AG04449 (cell line): ENCODE measurements at regions of chr10 and their contacts with region 1.

Region 1: GRCh38 chr10:124388823-124389612 is 29.7 kb downstream of the OAT start:
- DNase-seq: no peak
- H3K4me3 ChIP-seq: peak overlapping the region; percentile 50
- CTCF ChIP-seq: peak; percentile 97

Region 2: DNA sequence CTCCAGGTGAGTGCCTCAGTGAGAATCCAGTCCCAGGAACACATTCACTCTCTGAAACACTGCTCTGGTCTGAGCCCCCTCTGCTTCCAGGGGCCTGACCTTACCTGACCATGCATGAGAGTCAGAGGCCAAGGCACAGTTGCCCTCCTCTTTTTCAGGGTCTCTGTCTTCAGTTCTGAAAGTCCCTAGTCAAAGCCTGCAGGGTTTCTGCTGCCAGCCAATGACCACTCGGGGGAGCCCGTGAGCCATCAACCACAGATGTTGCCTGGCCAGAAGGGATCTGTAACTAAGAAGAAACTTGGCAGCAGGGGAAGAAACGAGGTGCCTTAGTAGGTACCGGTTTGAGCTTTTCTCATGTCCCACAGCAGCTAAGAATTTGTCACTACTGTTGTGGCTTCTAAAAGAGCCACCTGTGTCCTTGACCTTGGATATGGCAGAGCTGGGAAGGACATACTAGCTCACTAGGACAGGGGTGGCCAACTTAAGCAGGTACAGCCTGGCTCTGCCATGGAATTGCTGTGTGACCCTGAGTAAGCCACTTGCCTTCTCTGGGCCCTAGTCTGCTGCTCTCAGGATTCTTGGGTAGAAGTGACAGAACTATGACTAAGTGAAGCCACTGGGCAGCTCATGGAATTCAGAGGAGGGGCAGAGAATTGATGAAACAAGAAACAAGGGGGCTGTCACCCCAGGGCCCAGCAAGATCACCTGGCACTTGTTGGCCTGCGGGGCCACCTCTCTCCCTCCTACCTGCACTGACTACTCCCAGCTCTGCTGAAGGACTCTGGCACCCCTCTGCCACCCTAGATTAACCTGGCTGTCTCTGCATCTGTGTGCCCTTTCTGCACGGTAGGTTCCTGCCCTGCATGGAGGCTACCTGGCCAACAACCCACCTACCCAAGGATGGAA is 806.7 kb before region 1 on chr10:
- CTCF ChIA-PET with region 1: interaction called, 17 read pairs
- POLR2A ChIA-PET with region 1: no interaction called
- DNase-seq: peak; percentile 19
- H3K4me3 ChIP-seq: no peak overlapping the region
- CTCF ChIP-seq: peak; percentile 90

Region 3: DNA sequence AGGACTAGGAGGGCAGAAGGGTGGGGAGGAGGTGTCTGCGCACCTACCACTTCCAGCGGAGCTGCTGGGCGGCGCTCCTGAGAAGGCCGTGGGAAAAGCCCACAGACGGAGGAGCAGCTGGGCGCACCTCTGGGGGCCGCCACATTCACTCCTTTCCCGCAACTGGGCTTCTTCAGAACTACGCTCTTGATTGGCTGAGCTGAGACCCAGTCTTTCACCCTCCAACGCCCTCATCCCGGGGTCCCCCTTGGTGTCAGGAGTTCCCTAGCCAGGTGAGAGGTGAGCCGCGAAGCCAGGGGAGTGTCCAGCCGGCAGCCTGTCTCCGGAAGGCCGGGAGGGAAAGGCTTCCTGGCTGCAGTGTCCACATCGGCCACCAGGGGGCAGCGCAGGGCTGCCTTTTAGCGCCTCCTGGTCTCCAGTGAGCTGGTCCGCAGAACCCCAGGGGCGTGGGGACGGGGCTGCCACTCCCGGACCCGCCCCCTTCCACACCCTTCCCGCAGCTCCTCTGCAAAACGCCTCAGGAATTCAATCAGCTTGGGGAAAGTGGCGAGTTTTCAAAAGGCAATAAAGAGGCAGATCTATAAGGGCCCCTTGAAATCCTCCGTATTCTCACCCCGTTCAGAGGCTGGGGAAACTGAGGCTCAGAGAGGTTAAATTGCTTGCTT is 394.5 kb before region 1 on chr10:
- CTCF ChIA-PET with region 1: interaction called, 573 read pairs
- POLR2A ChIA-PET with region 1: interaction called, 9 read pairs
- DNase-seq: peak; percentile 59
- H3K4me3 ChIP-seq: peak overlapping the region; percentile 44
- CTCF ChIP-seq: peak; percentile 99

Region 4: DNA sequence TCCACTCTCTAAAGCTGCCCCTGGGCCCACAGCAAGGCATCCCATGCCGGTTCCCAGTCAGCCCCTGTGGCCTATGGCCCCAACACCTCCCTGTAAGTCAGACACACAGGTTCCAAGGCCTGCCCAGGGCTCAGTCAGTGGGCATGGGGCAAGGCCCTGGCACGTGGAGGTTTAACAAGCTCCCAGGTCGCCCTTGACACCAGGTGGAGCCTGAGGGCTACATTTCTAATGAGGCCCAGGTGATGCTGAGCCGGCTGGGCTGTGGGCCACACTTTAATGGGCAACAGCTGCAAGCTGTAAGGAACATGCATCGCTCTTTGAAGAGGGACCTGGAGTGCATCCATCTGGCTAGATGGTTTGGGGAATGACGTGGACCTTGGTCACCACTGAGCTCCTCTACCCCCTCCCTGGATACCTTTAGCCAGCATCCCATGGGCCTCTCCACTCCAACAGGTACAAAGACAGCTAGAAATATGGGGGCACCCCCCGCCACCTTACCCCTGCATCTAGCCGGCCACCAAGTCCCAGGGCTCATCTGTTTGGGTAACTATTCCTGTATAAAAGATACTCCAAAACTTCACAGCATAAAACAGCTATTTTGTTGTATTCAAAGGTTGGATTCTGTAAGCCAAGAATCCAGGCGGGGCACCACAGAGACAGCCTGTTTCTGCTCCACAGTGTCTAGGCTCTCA is 92.8 kb before region 1 on chr10:
- CTCF ChIA-PET with region 1: interaction called, 12 read pairs
- POLR2A ChIA-PET with region 1: no interaction called
- DNase-seq: no peak
- H3K4me3 ChIP-seq: no peak overlapping the region
- CTCF ChIP-seq: no peak

Region 5: GRCh38 chr10:124372899-124373298 is 16.1 kb before region 1 on chr10:
- CTCF ChIA-PET with region 1: interaction called, 19 read pairs
- POLR2A ChIA-PET with region 1: no interaction called
- DNase-seq: no peak
- H3K4me3 ChIP-seq: no peak overlapping the region
- CTCF ChIP-seq: no peak

Region 6: GRCh38 chr10:124409696-124410095 is 20.7 kb after region 1 on chr10:
- CTCF ChIA-PET with region 1: interaction called, 37 read pairs
- POLR2A ChIA-PET with region 1: interaction called, 3 read pairs
- DNase-seq: no peak
- H3K4me3 ChIP-seq: no peak overlapping the region
- CTCF ChIP-seq: no peak

Region 7: GRCh38 chr10:124436191-124436638 is 47.2 kb after region 1 on chr10:
- CTCF ChIA-PET with region 1: no interaction called
- POLR2A ChIA-PET with region 1: no interaction called
- DNase-seq: no peak
- H3K4me3 ChIP-seq: no peak overlapping the region
- CTCF ChIP-seq: no peak